ENCODE measurements at regions of chr16 and their contacts with region 1.

Region 1: DNA sequence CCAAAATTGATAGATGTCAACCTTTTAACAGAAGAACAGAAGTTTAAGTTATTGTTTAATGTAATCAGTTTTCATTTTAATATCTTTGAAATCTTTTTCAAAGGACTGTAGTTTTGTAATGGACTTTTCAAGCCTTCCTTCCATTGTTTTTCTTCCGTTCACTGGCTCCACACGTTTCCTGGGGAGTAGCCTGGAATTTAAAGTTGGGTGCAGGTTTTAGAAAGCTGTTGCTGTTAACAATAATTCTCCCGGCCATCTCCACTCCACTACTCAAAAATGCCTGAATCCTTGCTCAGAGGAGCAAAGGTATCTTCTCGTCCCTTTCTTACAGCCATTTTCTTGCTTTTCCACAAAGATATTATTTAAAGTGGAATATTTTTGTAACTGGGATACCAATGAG is 4.7 kb upstream of the COQ7 start:
- DNase-seq: no peak
- H3K4me3 ChIP-seq: no peak overlapping the region
- H3K27ac ChIP-seq: peak overlapping the region in 1 of 2 donors; percentile 22
- H3K4me1 ChIP-seq: no peaks in the 10 kb centered on the region
- H3K27me3 ChIP-seq: no peaks in the 10 kb centered on the region
- CTCF ChIP-seq: no peak
- POLR2A ChIP-seq: no peak

Region 2: GRCh38 chr16:18983565-18984424 is 78.9 kb before region 1 on chr16 and contains the start of gene TMC7:
- intact Hi-C with region 1: loop called (anchors 10 kb)
- DNase-seq: peak; percentile 53 to 56
- H3K4me3 ChIP-seq: peak within 1 kb of the TSS; percentile 20 to 43
- H3K27ac ChIP-seq: peak within 1 kb of the TSS; percentile 50 to 56
- H3K4me1 ChIP-seq: no peaks in the 10 kb centered on the region
- H3K27me3 ChIP-seq: no peaks in the 10 kb centered on the region
- CTCF ChIP-seq: peak; percentile 46 to 75 (median 62)
- POLR2A ChIP-seq: peak in 1 of 2 donors; percentile 9
- total RNA-seq, gene TMC7: 1.7 to 1.8 TPM in 2 of 4 donors, not detected in the others

Region 3: GRCh38 chr16:19005561-19006445 is 56.9 kb before region 1 on chr16:
- intact Hi-C with region 1: no loop called
- DNase-seq: peak in 1 of 2 donors; percentile 34
- H3K4me3 ChIP-seq: no peak overlapping the region
- H3K27ac ChIP-seq: no peak overlapping the region
- H3K4me1 ChIP-seq: no peaks in the 10 kb centered on the region
- H3K27me3 ChIP-seq: no peaks in the 10 kb centered on the region
- CTCF ChIP-seq: no peak
- POLR2A ChIP-seq: no peak

Region 4: DNA sequence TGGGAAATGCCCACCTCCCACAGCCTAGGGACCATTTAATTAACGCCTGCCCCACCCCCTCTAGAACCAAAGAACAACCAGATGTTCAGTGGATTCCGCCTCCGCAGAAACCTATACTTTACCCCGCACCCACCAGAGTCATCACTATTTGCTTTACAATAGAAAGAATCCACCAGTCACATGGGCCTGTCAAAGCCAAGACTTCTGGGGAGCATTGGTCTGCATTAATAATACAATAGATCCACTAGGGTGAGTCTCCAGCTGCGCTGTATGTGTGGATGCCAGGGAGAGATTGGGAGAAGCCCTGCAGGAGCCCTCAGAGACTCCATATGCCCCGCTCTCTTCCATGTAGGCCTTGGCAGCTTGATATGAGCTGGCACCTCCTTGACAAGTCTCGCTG is 254.1 kb after region 1 on chr16:
- intact Hi-C with region 1: no loop called
- DNase-seq: no peak
- H3K4me3 ChIP-seq: no peak overlapping the region
- H3K27ac ChIP-seq: no peak overlapping the region
- H3K4me1 ChIP-seq: no peaks in the 10 kb centered on the region
- H3K27me3 ChIP-seq: no peaks in the 10 kb centered on the region
- CTCF ChIP-seq: no peak
- POLR2A ChIP-seq: no peak

Measured in uterus (tissue), 4 donors.